Activated B cell treated with CpG ODN at 0.5 μM for 24 hours (primary cell): ENCODE measurements at regions of chr1 and their contacts with region 1.

Region 1: GRCh38 chr1:44721485-44722361 is 9.2 kb downstream of the RNU5D-1 start:
- DNase-seq: peak; percentile 61
- ATAC-seq: peak; percentile 80
- H3K4me3 Mint-ChIP-seq: peak overlapping the region; percentile 47
- H3K27ac Mint-ChIP-seq: peak overlapping the region; percentile 99
- H3K4me1 Mint-ChIP-seq: peaks cover 76% of the 10 kb centered on the region
- H3K27me3 Mint-ChIP-seq: no peaks in the 10 kb centered on the region
- CTCF ChIP-seq: no peak

Region 2: DNA sequence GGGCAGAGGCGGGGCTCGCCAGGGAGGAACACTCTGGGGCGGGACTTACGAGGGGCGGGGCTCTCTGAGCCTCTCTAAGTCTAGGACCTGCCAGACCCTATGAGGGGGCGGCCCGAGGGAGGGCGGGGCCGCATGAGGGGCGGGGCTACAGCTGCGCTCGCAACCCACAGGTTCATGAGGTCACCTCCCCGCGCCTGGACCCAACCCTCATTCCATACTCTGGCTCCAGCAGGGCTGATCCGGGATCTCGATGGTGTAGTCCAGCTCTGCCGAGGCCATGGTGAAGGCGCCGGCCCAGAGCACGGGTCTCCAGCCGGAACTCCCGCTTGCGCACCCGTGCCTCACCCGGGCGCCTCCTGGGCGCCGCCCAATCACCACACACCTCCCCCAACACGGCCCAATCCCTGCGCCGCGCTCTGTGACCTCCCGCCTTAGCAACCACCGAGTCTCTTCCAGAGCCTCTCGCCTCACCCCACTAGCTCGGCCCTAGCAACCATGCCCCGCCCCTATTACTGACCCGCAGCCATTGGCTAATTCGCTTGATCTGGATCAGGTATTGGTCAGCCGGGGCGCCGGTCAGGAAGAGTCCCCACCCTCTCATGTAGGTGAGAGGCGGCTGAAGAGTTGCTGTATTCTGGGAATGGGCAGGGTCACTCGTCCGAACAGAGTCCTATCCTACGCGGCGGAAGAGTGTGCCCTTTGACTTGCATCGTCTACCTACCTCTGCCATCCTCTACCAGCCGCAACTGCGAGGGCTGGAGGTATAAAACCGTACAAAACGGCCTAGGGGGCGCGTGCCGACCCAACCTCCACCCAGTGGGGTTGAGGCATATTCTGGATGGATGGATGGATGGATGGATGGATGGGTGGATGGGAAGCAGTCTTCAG is 47.4 kb before region 1 on chr1 and contains the starts of genes ARMH1 and TMEM53:
- CTCF ChIA-PET with region 1: interaction called, 4 read pairs
- POLR2A ChIA-PET with region 1: interaction called, 89 read pairs
- intact Hi-C with region 1: loop called (anchors 1 kb)
- DNase-seq: peak; percentile 98
- ATAC-seq: peak; percentile 90
- H3K4me3 Mint-ChIP-seq: peak within 1 kb of the TSS; percentile 87
- H3K27ac Mint-ChIP-seq: peak within 1 kb of the TSS; percentile 93
- H3K4me1 Mint-ChIP-seq: peaks cover 32% of the 10 kb centered on the region
- H3K27me3 Mint-ChIP-seq: no peaks in the 10 kb centered on the region
- CTCF ChIP-seq: no peak
- total RNA-seq, gene ARMH1: 18.1 and 19.9 TPM in 2 replicates
- total RNA-seq, gene TMEM53: 4.6 and 4.8 TPM in 2 replicates

Region 3: GRCh38 chr1:44775078-44775929 is 53.6 kb after region 1 on chr1 and contains the start of gene RPS8:
- CTCF ChIA-PET with region 1: interaction called, 3 read pairs
- POLR2A ChIA-PET with region 1: interaction called, 114 read pairs
- intact Hi-C with region 1: loop called (anchors 2 kb)
- DNase-seq: peak; percentile 84
- ATAC-seq: peak; percentile 82
- H3K4me3 Mint-ChIP-seq: peak within 1 kb of the TSS; percentile 98
- H3K27ac Mint-ChIP-seq: peak within 1 kb of the TSS; percentile 99
- H3K4me1 Mint-ChIP-seq: peaks cover 40% of the 10 kb centered on the region
- H3K27me3 Mint-ChIP-seq: no peaks in the 10 kb centered on the region
- CTCF ChIP-seq: no peak
- total RNA-seq, gene RPS8: 3,767 and 4,240 TPM in 2 replicates

Region 4: GRCh38 chr1:44819608-44820327 is 98.0 kb after region 1 on chr1:
- CTCF ChIA-PET with region 1: interaction called, 5 read pairs
- POLR2A ChIA-PET with region 1: interaction called, 232 read pairs
- intact Hi-C with region 1: loop called (anchors 1 kb)
- DNase-seq: peak; percentile 80
- ATAC-seq: peak; percentile 85
- H3K4me3 Mint-ChIP-seq: peak overlapping the region; percentile 88
- H3K27ac Mint-ChIP-seq: peak overlapping the region; percentile 100
- H3K4me1 Mint-ChIP-seq: peaks cover 35% of the 10 kb centered on the region
- H3K27me3 Mint-ChIP-seq: no peaks in the 10 kb centered on the region
- CTCF ChIP-seq: no peak

Region 5: DNA sequence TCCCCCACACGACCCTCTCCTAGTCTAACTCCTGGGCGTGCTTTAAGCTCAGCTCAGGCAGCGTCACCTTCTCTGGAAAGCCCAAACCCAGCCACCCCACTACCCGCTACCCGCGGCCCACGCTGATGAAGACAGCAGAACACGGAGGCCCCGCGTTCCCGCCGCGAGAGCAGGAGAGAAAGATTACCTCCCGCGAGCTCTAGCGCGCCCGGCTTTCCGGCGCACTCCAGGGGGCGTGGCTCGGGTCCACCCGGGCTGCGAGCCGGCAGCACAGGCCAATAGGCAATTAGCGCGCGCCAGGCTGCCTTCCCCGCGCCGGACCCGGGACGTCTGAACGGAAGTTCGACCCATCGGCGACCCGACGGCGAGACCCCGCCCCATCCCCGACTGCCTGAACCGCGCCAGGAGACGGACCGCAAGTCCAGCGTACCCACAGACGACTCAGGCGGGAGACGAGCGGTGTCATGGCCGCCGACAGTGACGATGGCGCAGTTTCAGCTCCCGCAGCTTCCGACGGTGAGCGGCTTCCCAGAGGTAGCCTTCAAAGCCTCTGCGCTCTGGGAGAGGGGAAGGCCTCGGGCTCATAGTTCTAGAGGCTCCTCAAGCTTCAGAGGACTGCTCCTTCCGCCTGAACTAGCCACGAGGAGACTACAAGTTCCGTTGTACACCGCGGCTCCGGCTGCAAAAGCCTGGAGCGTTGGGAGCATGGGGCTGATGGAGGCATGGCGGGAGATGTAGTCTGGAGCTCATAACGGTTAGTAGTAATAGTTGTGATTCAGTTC is 618.3 kb after region 1 on chr1 and contains the starts of genes MUTYH and TOE1:
- CTCF ChIA-PET with region 1: no interaction called
- POLR2A ChIA-PET with region 1: interaction called, 34 read pairs
- intact Hi-C with region 1: no loop called
- DNase-seq: peak; percentile 85
- ATAC-seq: peak; percentile 86
- H3K4me3 Mint-ChIP-seq: peak within 1 kb of the TSS; percentile 100
- H3K27ac Mint-ChIP-seq: peak within 1 kb of the TSS; percentile 99
- H3K4me1 Mint-ChIP-seq: peaks cover 39% of the 10 kb centered on the region
- H3K27me3 Mint-ChIP-seq: no peaks in the 10 kb centered on the region
- CTCF ChIP-seq: no peak
- total RNA-seq, gene MUTYH: 61.0 and 63.0 TPM in 2 replicates
- total RNA-seq, gene TOE1: 24.6 and 25.3 TPM in 2 replicates

Region 6: DNA sequence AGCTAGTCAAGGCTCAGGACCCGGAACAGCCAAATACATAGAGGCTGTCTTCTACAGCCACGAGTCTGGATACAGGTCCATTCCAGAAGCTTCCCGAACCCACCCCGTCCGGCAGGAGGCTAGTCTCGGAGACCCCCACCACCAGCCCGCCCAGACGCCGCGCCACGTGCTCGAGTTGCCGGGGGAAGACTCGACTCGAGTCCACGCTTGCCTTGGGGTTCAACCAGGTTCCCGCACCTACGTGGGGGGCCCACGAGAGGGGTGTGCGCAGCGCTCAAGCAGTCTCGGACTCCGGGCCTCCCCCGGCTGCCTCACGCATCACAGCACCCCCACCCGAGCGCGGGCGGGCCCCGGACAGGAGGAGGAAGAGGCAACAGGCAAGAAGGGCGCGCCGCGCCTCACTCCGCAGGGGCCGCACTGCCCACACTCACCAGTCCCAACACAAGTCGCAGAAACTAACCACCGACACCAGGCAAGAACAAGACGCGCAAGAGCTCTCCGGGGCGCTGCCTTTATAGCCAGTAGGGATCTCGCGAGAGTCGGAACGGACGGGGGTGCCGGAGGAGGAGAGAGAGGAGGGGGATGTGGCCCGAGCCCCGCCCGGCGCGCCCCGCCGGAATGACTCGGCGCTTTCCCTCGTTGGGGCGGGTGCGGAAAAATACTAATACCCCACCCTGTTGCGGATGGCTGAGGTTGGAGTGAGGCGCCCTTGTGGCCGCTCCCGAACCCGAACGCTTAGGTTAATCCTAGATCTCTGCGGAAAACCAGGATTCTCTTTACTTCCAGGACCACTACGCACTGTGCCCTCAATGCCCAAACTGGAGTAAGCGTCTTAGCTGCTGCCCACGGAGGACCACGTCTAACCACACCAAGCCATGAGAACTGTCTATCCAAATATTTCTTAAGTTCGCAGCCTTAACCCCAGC is 799.9 kb after region 1 on chr1 and contains the start of gene PRDX1:
- CTCF ChIA-PET with region 1: no interaction called
- POLR2A ChIA-PET with region 1: interaction called, 17 read pairs
- intact Hi-C with region 1: no loop called
- DNase-seq: peak; percentile 98
- ATAC-seq: peak; percentile 87
- H3K4me3 Mint-ChIP-seq: peak within 1 kb of the TSS; percentile 93
- H3K27ac Mint-ChIP-seq: peak within 1 kb of the TSS; percentile 92
- H3K4me1 Mint-ChIP-seq: peaks cover 49% of the 10 kb centered on the region
- H3K27me3 Mint-ChIP-seq: no peaks in the 10 kb centered on the region
- CTCF ChIP-seq: no peak
- total RNA-seq, gene PRDX1: 351 and 413 TPM in 2 replicates

Region 7: GRCh38 chr1:45686317-45687013 is 964.7 kb after region 1 on chr1 and contains the start of gene GPBP1L1:
- CTCF ChIA-PET with region 1: no interaction called
- POLR2A ChIA-PET with region 1: interaction called, 11 read pairs
- intact Hi-C with region 1: loop called (anchors 5 kb)
- DNase-seq: peak; percentile 98
- ATAC-seq: peak; percentile 73
- H3K4me3 Mint-ChIP-seq: peak within 1 kb of the TSS; percentile 99
- H3K27ac Mint-ChIP-seq: peak within 1 kb of the TSS; percentile 100
- H3K4me1 Mint-ChIP-seq: peaks cover 53% of the 10 kb centered on the region
- H3K27me3 Mint-ChIP-seq: no peaks in the 10 kb centered on the region
- CTCF ChIP-seq: no peak
- total RNA-seq, gene GPBP1L1: 133 and 138 TPM in 2 replicates